GM12878 (cell line): ENCODE measurements at regions of chr5 and their contacts with region 1.

Region 1: GRCh38 chr5:124980163-124980941 is 233.9 kb upstream of the ZNF608 start:
- DNase-seq: peak; percentile 48
- ATAC-seq: peak; percentile 91
- H3K4me3 ChIP-seq: peak overlapping the region; percentile 19
- H3K27ac ChIP-seq: peak overlapping the region; percentile 22
- H3K4me1 ChIP-seq: peaks cover 17% of the 10 kb centered on the region
- H3K27me3 ChIP-seq: no peaks in the 10 kb centered on the region
- CTCF ChIP-seq: no peak
- EP300 ChIP-seq: no peak; a peak in 1 of 4 replicates
- POLR2A ChIP-seq: no peak
- RAD21 ChIP-seq: peak; percentile 17; the same call in 1 of the 2 replicates

Region 2: GRCh38 chr5:124963236-124963961 is 17.0 kb before region 1 on chr5:
- CTCF ChIA-PET with region 1: interaction called, 3 read pairs
- POLR2A ChIA-PET with region 1: no interaction called
- RAD21 ChIA-PET with region 1: interaction called, 3 read pairs
- SMC1A ChIA-PET with region 1: interaction called, 13 read pairs
- in situ Hi-C with region 1: no loop called
- intact Hi-C with region 1: no loop called
- DNase-seq: no peak
- ATAC-seq: no peak
- H3K4me3 ChIP-seq: no peak overlapping the region
- H3K27ac ChIP-seq: no peak overlapping the region
- H3K4me1 ChIP-seq: no peaks in the 10 kb centered on the region
- H3K27me3 ChIP-seq: no peaks in the 10 kb centered on the region
- CTCF ChIP-seq: no peak
- EP300 ChIP-seq: no peak
- POLR2A ChIP-seq: no peak
- RAD21 ChIP-seq: no peak

Region 3: DNA sequence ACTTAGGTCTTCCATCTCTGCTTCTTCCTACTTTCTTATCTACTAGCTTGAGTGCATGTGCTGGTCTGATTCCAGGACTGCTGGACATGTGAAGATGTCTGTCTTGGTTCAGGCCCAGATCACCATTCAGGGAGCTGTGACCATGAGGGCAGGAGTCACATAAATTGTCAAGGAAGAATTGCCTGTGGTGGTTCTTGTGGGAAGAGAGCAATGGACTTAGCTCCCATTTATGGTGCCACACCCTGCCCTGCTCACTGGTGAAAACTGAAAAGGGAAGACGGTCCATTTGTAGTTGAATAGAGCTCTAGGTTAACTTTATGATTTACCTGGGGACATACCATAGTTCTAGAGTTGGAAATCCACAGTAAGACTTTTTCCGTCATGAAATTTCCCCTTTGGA is 10.4 kb after region 1 on chr5:
- CTCF ChIA-PET with region 1: interaction called, 4 read pairs
- POLR2A ChIA-PET with region 1: interaction called, 4 read pairs
- RAD21 ChIA-PET with region 1: no interaction called
- SMC1A ChIA-PET with region 1: interaction called, 11 read pairs
- in situ Hi-C with region 1: no loop called
- intact Hi-C with region 1: no loop called
- DNase-seq: no peak
- ATAC-seq: no peak
- H3K4me3 ChIP-seq: no peak overlapping the region
- H3K27ac ChIP-seq: no peak overlapping the region
- H3K4me1 ChIP-seq: no peaks in the 10 kb centered on the region
- H3K27me3 ChIP-seq: no peaks in the 10 kb centered on the region
- CTCF ChIP-seq: no peak
- EP300 ChIP-seq: no peak
- POLR2A ChIP-seq: no peak
- RAD21 ChIP-seq: no peak

Region 4: DNA sequence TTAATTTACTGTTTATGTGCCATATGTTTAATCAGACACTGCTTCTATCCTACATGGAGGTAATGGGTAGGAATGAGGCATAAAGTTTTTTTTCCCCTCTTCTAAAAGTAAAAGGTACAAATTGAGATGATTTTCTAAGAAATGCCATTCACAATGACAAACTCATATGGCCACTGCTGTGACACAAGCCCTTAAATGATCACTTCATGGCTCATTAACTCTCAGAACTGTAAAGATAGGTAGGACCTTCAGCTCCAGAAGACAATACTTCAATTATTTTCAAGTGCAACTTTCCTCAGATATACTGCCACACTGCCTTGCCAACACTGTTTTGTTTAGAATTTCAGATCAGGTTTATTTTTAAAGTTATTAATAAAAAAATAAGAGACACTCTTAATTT is 128.9 kb after region 1 on chr5:
- CTCF ChIA-PET with region 1: no interaction called
- POLR2A ChIA-PET with region 1: no interaction called
- RAD21 ChIA-PET with region 1: no interaction called
- SMC1A ChIA-PET with region 1: no interaction called
- in situ Hi-C with region 1: no loop called
- intact Hi-C with region 1: no loop called
- DNase-seq: no peak
- ATAC-seq: no peak
- H3K4me3 ChIP-seq: no peak overlapping the region
- H3K27ac ChIP-seq: no peak overlapping the region
- H3K4me1 ChIP-seq: no peaks in the 10 kb centered on the region
- H3K27me3 ChIP-seq: no peaks in the 10 kb centered on the region
- CTCF ChIP-seq: no peak
- EP300 ChIP-seq: no peak
- POLR2A ChIP-seq: no peak
- RAD21 ChIP-seq: no peak